GM13977 (cell line): ENCODE measurements at regions of chr10 and their contacts with region 1.

Region 1: GRCh38 chr10:84160663-84161362 is 12.8 kb upstream of the GPR15LG start:
- DNase-seq: no peak
- CTCF ChIP-seq: no peak

Region 2: DNA sequence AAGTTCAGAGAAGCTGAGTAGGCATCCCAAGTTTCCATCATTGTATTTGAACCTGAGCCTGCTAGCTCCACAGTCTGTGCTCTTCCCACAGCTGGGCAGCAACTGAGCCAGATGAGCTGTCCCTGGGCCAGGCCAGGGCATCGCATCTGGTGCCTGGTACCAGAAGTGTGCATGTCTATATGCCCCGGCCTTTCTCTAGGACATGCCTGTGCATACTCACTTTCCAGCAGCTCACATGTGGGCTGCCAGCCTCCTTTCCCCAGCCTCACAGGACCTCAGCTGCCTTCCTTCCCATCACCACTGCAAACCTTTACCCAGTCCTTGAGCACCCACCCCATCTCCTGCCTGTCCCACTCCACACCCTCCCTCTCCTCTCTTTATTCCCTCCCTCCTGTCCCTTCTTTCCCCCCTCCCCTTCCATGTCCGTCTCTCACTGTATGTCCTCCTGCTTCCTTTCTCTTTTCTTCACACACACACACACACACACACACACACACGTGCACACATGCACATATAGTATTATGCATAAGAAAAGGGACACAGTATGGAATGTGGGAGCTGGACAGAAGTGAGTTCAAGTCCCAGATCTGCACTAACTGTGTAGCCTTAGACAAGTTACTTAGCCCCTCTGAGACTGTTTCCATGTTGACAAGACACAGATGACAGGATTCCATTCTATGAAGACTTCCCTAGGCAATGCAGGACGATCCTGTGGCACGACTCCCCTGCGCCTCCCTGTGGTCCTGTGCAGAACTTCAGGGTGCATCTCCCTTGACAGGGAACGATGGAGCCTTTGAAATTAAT is 44.4 kb after region 1 on chr10:
- in situ Hi-C with region 1: loop called (anchors 5 kb)
- DNase-seq: peak; percentile 82
- CTCF ChIP-seq: peak; percentile 92

Region 3: GRCh38 chr10:84469470-84469869 is 308.7 kb after region 1 on chr10:
- in situ Hi-C with region 1: no loop called
- DNase-seq: no peak
- CTCF ChIP-seq: no peak

Region 4: DNA sequence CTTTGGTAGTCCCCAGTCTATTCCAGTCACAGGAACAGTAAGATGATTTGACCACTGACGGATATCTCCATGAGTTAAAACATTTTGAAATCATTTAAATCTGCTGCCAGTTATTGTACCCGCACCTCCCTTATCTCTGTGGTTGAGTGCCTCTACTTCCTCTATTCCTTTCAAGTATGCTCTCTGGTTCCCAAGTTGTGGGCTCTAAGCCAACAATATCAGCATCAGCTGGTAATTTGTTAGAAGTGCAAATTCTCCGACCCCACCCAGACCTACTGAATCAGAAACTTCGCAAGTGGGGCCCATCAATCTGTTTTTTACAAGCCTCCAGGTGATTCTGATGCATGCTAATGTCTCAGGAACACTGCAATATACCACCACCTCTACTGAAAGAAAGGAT is 403.1 kb after region 1 on chr10:
- in situ Hi-C with region 1: no loop called
- DNase-seq: no peak
- CTCF ChIP-seq: no peak